CD8-positive, alpha-beta T cell (primary cell): ENCODE measurements at regions of chr4 and their contacts with region 1.

Region 1: DNA sequence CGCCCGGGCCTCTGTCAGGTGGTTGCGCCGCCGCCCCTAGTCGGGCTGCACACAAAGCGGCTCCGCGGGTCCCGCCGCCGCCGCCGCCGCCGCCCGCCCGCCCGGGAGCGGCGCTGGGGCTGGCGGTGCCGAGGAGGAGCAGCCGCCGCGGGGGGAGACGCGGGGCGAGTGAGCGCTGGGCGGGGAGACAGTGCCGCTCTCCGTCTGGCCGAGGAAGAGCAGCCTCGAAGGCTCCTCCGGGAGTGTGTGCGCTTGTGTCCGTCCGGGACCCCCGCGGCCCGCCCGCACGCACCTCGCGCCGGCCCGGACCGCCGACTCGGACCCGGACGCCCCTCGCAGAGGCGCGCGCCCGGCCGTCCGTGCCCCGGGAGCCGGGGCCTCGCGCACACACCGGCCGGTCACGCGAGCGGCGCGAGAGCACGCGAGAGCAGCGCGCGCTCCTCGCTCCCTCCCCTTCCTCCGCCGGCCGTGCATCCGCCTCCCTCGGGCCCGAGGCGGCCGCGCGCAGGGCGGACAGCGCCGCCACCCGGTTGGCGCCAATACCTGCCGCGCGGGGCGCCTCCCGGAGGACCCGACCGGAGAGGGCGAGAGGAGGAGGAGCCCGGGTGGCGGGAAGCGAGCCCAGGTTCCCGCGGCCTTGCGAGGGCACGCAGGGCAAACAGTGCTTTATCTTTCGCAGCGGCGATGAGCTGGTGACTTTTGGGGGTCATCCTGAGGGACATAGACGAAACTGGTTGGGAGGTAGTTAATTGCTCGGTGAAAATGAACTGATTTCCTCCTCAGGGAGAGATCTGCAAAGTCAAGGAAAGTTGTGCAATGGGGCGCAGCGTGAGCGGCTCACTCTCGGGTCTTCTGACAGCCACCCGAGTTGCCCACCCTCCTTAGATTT is at the start of gene PDS5A:
- DNase-seq: peak; percentile 76 to 96 (median 87)
- ATAC-seq: peak; percentile 83
- H3K4me3 ChIP-seq: peak within 1 kb of the TSS; percentile 76 to 77
- H3K4me3 Mint-ChIP-seq: peak within 1 kb of the TSS; percentile 90
- H3K27ac ChIP-seq: peak within 1 kb of the TSS; percentile 80 to 81
- H3K27ac Mint-ChIP-seq: peak within 1 kb of the TSS; percentile 95
- H3K4me1 ChIP-seq: peaks cover 31% of the 10 kb centered on the region
- H3K4me1 Mint-ChIP-seq: peaks cover 30% of the 10 kb centered on the region
- H3K27me3 ChIP-seq: no peaks in the 10 kb centered on the region
- H3K27me3 Mint-ChIP-seq: no peaks in the 10 kb centered on the region
- CTCF ChIP-seq: peak; percentile 79
- total RNA-seq, gene PDS5A: 75.5 to 84.0 TPM

Region 2: GRCh38 chr4:39458505-39459300 is 519.0 kb before region 1 on chr4 and contains the starts of genes LIAS and RPL9:
- CTCF ChIA-PET with region 1: interaction called, 4 read pairs
- POLR2A ChIA-PET with region 1: interaction called, 3 read pairs
- intact Hi-C with region 1: loop called (anchors 2 kb)
- DNase-seq: peak; percentile 83 to 99 (median 94)
- ATAC-seq: peak; percentile 81
- H3K4me3 ChIP-seq: peak within 1 kb of the TSS; percentile 87 to 90
- H3K4me3 Mint-ChIP-seq: peak within 1 kb of the TSS; percentile 98
- H3K27ac ChIP-seq: peak within 1 kb of the TSS; percentile 91 to 97
- H3K27ac Mint-ChIP-seq: peak within 1 kb of the TSS; percentile 100
- H3K4me1 ChIP-seq: peaks cover 25% of the 10 kb centered on the region
- H3K4me1 Mint-ChIP-seq: peaks cover 42% of the 10 kb centered on the region
- H3K27me3 ChIP-seq: no peaks in the 10 kb centered on the region
- H3K27me3 Mint-ChIP-seq: no peaks in the 10 kb centered on the region
- CTCF ChIP-seq: no peak
- total RNA-seq, gene LIAS: 9.5 to 11.0 TPM
- total RNA-seq, gene RPL9: 2,977 to 3,433 TPM

Region 3: DNA sequence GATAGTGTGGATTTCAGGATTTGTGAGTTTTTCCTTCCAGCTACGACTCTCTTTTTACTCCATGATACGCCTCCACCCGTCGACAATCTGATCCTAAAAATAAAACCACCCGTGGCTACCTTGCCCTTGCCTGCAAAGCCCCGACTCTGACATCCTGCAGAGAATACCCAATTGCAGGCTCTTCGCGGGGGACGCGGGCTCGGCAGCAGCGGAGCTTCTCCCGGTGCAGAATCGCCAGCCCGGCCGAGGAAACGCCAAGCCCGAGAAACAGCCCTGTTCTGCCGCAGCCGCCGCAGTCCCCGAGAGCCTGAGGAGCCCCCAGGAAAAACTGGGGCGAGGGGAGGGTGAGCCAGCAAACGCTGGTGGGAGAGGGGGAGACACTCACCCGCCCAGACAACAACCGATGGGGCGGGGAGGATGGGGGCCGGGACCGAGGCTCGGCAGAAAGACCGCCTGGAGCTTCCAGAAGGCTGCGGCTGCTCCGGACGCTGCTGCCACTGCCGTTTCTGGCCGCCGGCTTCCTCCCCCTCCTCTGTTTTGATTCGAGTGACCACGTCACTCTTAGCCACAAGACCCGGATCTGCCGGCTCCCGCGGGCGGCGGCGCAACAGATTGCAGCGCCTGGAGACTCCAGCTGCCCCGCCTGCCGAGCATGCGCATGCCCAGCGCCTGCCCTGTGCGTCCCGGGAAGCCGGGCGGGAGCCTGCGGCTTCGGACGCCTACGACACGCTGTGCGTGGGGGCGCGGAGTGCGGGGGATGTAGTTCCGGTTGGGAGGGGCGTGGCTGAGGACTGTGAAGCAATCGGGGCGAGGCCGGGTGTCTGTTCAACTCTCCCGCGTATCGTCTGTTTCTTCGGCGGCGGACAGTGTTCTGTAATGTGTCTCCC is 339.1 kb before region 1 on chr4 and contains the start of gene SMIM14:
- CTCF ChIA-PET with region 1: no interaction called
- POLR2A ChIA-PET with region 1: no interaction called
- intact Hi-C with region 1: loop called (anchors 1 to 5 kb)
- DNase-seq: peak; percentile 72 to 95 (median 90)
- ATAC-seq: peak; percentile 83
- H3K4me3 ChIP-seq: peak within 1 kb of the TSS; percentile 62 to 97
- H3K4me3 Mint-ChIP-seq: peak within 1 kb of the TSS; percentile 90
- H3K27ac ChIP-seq: peak within 1 kb of the TSS; percentile 63 to 91
- H3K27ac Mint-ChIP-seq: peak within 1 kb of the TSS; percentile 96
- H3K4me1 ChIP-seq: peaks cover 18% of the 10 kb centered on the region
- H3K4me1 Mint-ChIP-seq: peaks cover 44% of the 10 kb centered on the region
- H3K27me3 ChIP-seq: no peaks in the 10 kb centered on the region
- H3K27me3 Mint-ChIP-seq: no peaks in the 10 kb centered on the region
- CTCF ChIP-seq: no peak
- total RNA-seq, gene SMIM14: 1.4 TPM

Region 4: GRCh38 chr4:39864403-39864802 is 113.3 kb before region 1 on chr4:
- CTCF ChIA-PET with region 1: no interaction called
- POLR2A ChIA-PET with region 1: interaction called, 3 read pairs
- intact Hi-C with region 1: loop called in 1 of 2 experiments (anchors 10 kb)
- DNase-seq: no peak
- ATAC-seq: no peak
- H3K4me3 ChIP-seq: no peak overlapping the region
- H3K4me3 Mint-ChIP-seq: no peak overlapping the region
- H3K27ac ChIP-seq: no peak overlapping the region
- H3K27ac Mint-ChIP-seq: no peak overlapping the region
- H3K4me1 ChIP-seq: no peaks in the 10 kb centered on the region
- H3K4me1 Mint-ChIP-seq: peaks cover 2% of the 10 kb centered on the region
- H3K27me3 ChIP-seq: no peaks in the 10 kb centered on the region
- H3K27me3 Mint-ChIP-seq: no peaks in the 10 kb centered on the region
- CTCF ChIP-seq: no peak

Region 5: DNA sequence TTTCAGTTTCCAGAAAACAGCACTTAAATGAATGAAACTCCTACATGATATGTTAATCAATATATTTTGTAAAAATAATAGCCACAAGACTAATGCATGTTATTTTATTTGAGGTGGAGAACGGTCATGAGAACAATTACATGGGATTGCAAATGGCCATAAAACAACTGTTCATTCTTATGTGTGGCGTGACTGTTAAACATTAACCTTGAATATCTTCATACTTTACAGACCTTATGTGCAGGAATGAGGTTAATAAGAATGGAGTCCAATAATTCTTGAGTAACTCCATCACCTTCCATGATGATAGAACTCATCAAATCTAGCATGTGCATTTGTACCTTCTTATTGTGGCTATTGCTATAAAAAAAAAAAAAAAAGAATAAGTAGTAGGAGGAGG is 55.3 kb before region 1 on chr4:
- CTCF ChIA-PET with region 1: interaction called, 3 read pairs
- POLR2A ChIA-PET with region 1: no interaction called
- intact Hi-C with region 1: loop called in 1 of 2 experiments (anchors 5 kb)
- DNase-seq: no peak
- ATAC-seq: no peak
- H3K4me3 ChIP-seq: no peak overlapping the region
- H3K4me3 Mint-ChIP-seq: no peak overlapping the region
- H3K27ac ChIP-seq: no peak overlapping the region
- H3K27ac Mint-ChIP-seq: no peak overlapping the region
- H3K4me1 ChIP-seq: no peaks in the 10 kb centered on the region
- H3K4me1 Mint-ChIP-seq: peaks cover 14% of the 10 kb centered on the region
- H3K27me3 ChIP-seq: no peaks in the 10 kb centered on the region
- H3K27me3 Mint-ChIP-seq: no peaks in the 10 kb centered on the region
- CTCF ChIP-seq: no peak

Region 6: DNA sequence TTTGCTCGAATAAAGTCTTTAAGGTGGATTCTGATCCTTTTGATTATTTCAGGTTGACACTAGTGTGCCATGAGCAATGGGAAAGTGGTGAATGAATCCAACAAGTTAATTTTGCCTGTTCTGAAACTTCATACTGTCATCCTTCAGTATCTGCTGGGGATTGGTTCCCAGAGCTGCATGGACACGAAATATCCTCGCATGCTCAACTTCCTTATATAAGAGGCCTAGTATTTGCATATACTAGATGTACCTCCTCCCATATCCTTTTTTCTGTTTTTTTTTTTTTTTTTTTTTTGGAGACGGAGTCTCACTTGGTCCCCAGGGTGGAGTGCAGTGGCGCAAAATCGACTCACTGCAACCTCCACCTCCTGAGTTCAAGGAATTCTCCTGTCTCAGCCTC is 23.0 kb after region 1 on chr4:
- CTCF ChIA-PET with region 1: no interaction called
- POLR2A ChIA-PET with region 1: no interaction called
- intact Hi-C with region 1: no loop called
- DNase-seq: no peak
- ATAC-seq: no peak
- H3K4me3 ChIP-seq: no peak overlapping the region
- H3K4me3 Mint-ChIP-seq: no peak overlapping the region
- H3K27ac ChIP-seq: no peak overlapping the region
- H3K27ac Mint-ChIP-seq: no peak overlapping the region
- H3K4me1 ChIP-seq: no peaks in the 10 kb centered on the region
- H3K4me1 Mint-ChIP-seq: no peaks in the 10 kb centered on the region
- H3K27me3 ChIP-seq: no peaks in the 10 kb centered on the region
- H3K27me3 Mint-ChIP-seq: no peaks in the 10 kb centered on the region
- CTCF ChIP-seq: no peak

Region 7: GRCh38 chr4:40446839-40447238 is 469.1 kb after region 1 on chr4:
- CTCF ChIA-PET with region 1: no interaction called
- POLR2A ChIA-PET with region 1: no interaction called
- intact Hi-C with region 1: no loop called
- DNase-seq: no peak
- ATAC-seq: no peak
- H3K4me3 ChIP-seq: no peak overlapping the region
- H3K4me3 Mint-ChIP-seq: no peak overlapping the region
- H3K27ac ChIP-seq: no peak overlapping the region
- H3K27ac Mint-ChIP-seq: no peak overlapping the region
- H3K4me1 ChIP-seq: no peaks in the 10 kb centered on the region
- H3K4me1 Mint-ChIP-seq: peaks cover 2% of the 10 kb centered on the region
- H3K27me3 ChIP-seq: no peaks in the 10 kb centered on the region
- H3K27me3 Mint-ChIP-seq: no peaks in the 10 kb centered on the region
- CTCF ChIP-seq: no peak

Region 8: GRCh38 chr4:41934815-41935651 is 1957.3 kb after region 1 on chr4 and contains the start of gene TMEM33:
- CTCF ChIA-PET with region 1: no interaction called
- POLR2A ChIA-PET with region 1: no interaction called
- intact Hi-C with region 1: loop called in 1 of 2 experiments (anchors 10 kb)
- DNase-seq: peak; percentile 50 to 92 (median 77)
- ATAC-seq: peak; percentile 84
- H3K4me3 ChIP-seq: peak within 1 kb of the TSS; percentile 85 to 87
- H3K4me3 Mint-ChIP-seq: peak within 1 kb of the TSS; percentile 95
- H3K27ac ChIP-seq: peak within 1 kb of the TSS; percentile 69 to 70
- H3K27ac Mint-ChIP-seq: peak within 1 kb of the TSS; percentile 92
- H3K4me1 ChIP-seq: peaks cover 34% of the 10 kb centered on the region
- H3K4me1 Mint-ChIP-seq: peaks cover 49% of the 10 kb centered on the region
- H3K27me3 ChIP-seq: no peaks in the 10 kb centered on the region
- H3K27me3 Mint-ChIP-seq: no peaks in the 10 kb centered on the region
- CTCF ChIP-seq: no peak
- total RNA-seq, gene TMEM33: 23.2 to 24.6 TPM